ENCODE measurements at regions of chr19 and their contacts with region 1.

Region 1: DNA sequence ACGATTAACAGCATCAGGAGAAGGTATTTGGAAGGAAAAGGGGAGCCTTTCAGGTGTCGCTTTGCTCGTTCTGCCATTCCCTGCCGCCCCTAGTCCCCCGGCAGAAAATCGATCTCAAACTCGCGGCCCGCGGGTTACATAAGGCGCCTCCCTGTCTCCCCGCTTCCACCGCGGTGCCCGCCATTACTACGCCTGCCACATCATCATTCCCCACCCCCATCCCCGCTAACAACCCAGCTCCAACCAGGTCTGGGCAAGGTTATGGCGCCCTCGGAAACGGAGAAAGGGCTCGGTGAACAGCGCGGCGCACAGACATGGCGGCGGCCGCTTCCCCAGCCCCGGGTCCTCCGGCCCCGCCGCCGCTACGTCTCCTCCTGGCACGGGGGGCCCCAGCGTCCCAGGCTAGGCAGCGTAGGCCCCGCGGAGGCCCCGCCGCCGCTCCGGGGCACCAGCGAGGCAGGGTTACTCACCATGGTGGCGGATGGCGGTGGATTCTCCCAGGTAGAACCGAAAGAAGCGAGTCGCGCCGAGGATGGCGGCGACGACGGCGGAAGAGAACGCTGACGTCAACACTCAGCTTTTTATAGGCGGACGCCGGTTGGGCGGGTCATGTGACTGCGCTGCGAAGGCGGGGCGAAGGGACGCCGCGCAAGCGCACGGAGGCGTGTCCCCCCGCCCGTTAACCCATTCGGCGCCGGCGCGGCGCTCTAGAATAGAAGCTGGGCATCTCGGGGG is at the start of gene EEF2:
- DNase-seq: peak; percentile 95
- ATAC-seq: peak; percentile 51
- H3K4me3 Mint-ChIP-seq: peak within 1 kb of the TSS; percentile 98
- H3K27ac Mint-ChIP-seq: peak within 1 kb of the TSS; percentile 98
- H3K4me1 Mint-ChIP-seq: peaks cover 22% of the 10 kb centered on the region
- H3K27me3 Mint-ChIP-seq: no peaks in the 10 kb centered on the region
- total RNA-seq, gene EEF2: 1,510 to 1,513 TPM

Region 2: GRCh38 chr19:3931041-3931440 is 54.0 kb before region 1 on chr19:
- POLR2A ChIA-PET with region 1: no interaction called
- DNase-seq: no peak
- ATAC-seq: no peak
- H3K4me3 Mint-ChIP-seq: no peak overlapping the region
- H3K27ac Mint-ChIP-seq: no peak overlapping the region
- H3K4me1 Mint-ChIP-seq: no peaks in the 10 kb centered on the region
- H3K27me3 Mint-ChIP-seq: peaks cover 30% of the 10 kb centered on the region

Region 3: DNA sequence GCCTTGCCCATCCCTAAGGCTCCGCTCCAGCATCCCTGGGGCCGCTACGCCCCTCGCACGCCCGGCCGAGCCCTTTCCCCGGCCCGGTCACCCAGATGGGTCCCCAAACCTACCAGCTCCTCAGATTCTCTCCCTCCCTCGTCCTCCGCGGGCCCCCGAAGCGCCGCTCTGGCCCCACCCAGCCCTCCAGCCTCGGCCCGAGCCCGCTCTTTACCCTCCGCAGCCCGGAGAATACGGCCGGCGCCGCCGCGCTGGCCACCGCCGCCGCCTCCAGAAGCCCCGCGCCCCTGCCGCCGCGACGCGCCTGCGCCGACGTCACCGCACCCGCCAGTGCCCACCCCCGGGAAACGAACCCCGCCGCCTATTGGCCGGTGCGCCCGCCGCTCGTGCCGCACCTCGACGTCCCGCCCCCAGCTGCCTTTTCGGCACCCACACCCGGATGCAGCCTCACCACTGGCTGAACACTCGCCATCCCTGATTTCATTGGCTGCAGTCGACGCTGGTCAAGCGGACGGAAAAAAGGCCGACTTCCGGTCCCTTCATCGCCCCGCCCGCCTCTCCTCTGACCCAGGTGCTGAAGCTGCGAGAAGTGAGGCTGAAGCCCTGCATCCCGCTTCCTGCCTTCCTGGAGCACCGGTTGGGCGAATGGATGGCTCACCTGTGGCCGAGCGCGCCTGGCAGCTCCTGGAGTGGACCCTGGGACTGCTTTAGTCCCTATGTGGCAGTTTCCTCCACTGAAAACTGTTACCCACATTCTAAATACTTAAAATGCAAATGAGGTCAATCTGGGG is 14.1 kb before region 1 on chr19 and contains the start of gene DAPK3:
- POLR2A ChIA-PET with region 1: interaction called, 34 read pairs
- DNase-seq: peak; percentile 94
- ATAC-seq: peak; percentile 94
- H3K4me3 Mint-ChIP-seq: peak within 1 kb of the TSS; percentile 89
- H3K27ac Mint-ChIP-seq: peak within 1 kb of the TSS; percentile 82
- H3K4me1 Mint-ChIP-seq: peaks cover 15% of the 10 kb centered on the region
- H3K27me3 Mint-ChIP-seq: no peaks in the 10 kb centered on the region
- total RNA-seq, gene DAPK3: 44.8 to 49.8 TPM

Region 4: DNA sequence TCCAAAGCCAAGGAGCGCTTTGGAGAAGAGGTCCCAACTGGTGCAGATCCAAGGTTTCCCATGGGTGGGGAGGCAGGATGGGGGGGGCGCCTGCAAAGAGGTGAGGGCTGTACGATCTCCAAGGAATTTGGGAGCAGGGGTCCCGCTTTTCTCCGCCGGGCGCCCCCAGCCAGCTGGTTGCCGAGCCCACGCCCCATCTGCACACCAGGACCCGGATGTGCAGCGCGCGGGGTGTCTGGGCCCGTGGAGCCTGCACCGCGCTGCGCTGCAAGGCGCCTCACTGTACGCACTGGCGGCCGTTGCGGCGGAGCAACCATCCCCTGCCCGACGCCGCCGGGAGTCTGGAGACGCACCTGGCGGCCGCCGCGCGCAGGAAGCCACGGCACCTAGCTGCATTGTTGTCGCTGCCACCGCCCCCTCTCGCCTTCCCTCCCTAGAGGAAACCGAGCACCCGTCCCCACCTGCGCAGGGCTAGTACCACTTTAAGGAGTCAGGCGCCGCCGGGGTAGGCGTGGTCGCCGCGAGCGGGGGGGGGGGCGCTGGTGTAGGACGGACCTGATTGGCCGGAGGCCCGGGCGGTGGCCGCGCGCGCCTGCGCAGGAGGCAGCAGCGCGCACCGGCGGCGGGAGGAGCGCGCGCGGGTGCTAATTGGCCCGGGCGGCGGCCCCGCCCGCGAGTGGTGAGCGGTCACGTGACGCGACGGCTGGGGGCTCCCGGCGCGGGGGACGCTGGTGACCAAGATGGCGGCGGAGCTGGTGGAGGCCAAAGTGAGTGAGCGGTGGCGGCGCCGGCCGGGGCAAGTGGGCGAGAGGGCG is 22.2 kb after region 1 on chr19 and contains the start of gene PIAS4:
- POLR2A ChIA-PET with region 1: interaction called, 21 read pairs
- DNase-seq: peak; percentile 98
- ATAC-seq: peak; percentile 91
- H3K4me3 Mint-ChIP-seq: peak within 1 kb of the TSS; percentile 85
- H3K27ac Mint-ChIP-seq: peak within 1 kb of the TSS; percentile 81
- H3K4me1 Mint-ChIP-seq: peaks cover 11% of the 10 kb centered on the region
- H3K27me3 Mint-ChIP-seq: no peaks in the 10 kb centered on the region
- total RNA-seq, gene PIAS4: 32.1 to 38.3 TPM